Endothelial cell of umbilical vein (primary cell): ENCODE measurements at regions of chr1 and their contacts with region 1.

Region 1: GRCh38 chr1:205523891-205524793 is 19.7 kb downstream of the CDK18 start:
- DNase-seq: peak; percentile 62
- H3K4me3 ChIP-seq: no peak overlapping the region
- H3K27ac ChIP-seq: no peak overlapping the region
- H3K4me1 ChIP-seq: no peaks in the 10 kb centered on the region
- H3K27me3 ChIP-seq: peaks cover 0 to 4% of the 10 kb centered on the region in 2 experiments
- CTCF ChIP-seq: peak; percentile 70 to 80
- POLR2A ChIP-seq: no peak

Region 2: DNA sequence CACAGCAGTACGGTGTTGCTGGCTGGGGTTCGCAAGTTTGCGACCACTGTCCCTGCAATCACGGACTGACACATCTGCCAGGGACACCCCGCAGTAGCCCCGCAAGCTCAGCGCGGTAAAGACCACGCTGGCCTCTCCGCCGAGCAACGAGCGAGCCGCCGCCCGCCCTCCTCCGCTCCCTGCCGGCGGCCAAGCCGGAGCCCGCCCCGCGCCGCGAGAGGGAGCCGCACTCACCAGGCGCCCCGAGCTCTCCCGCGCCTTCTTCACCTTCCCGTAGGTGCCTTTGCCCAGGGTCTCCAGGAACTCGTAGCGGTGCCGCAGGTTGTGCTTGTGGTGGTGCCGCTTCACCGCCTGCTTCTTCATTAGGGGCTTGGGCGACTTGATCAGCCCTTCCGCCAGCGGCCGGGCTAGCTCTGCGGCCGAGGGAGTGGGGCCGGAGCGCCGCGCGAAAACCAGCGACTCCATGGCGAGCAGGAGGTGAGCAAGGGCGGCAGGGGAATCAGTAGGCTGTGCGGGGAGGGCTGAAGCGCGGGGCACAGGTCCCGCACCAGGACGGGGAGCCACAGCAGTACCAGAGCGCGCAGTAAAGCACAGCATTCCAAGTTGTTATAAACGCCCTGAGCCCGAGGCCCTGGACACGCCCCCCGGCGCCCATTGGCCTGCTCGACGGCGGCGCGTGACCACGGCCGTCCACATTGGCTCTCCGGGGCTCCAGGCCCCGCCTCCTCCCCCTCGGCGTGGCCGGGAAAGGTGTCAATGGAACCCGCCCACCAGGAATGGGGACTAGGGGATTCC is 202.8 kb before region 1 on chr1 and contains the start of gene NUAK2:
- CTCF ChIA-PET with region 1: interaction called, 13 read pairs
- POLR2A ChIA-PET with region 1: no interaction called
- dilution Hi-C with region 1: no loop called
- intact Hi-C with region 1: no loop called
- DNase-seq: peak; percentile 89
- H3K4me3 ChIP-seq: peak within 1 kb of the TSS; percentile 58 to 68 (median 65)
- H3K27ac ChIP-seq: no peak within 1 kb of the TSS
- H3K4me1 ChIP-seq: peaks cover 18% of the 10 kb centered on the region
- H3K27me3 ChIP-seq: peaks cover 0 to 3% of the 10 kb centered on the region in 2 experiments
- CTCF ChIP-seq: peak; percentile 8 to 43
- POLR2A ChIP-seq: no peak
- total RNA-seq, gene NUAK2: 2.3 and 2.5 TPM in 2 replicates

Region 3: GRCh38 chr1:205387845-205388244 is 136.3 kb before region 1 on chr1:
- CTCF ChIA-PET with region 1: interaction called, 10 read pairs
- POLR2A ChIA-PET with region 1: no interaction called
- dilution Hi-C with region 1: no loop called
- intact Hi-C with region 1: no loop called
- DNase-seq: no peak
- H3K4me3 ChIP-seq: no peak overlapping the region
- H3K27ac ChIP-seq: no peak overlapping the region
- H3K4me1 ChIP-seq: no peaks in the 10 kb centered on the region
- H3K27me3 ChIP-seq: peaks cover 4 to 5% of the 10 kb centered on the region in 2 experiments
- CTCF ChIP-seq: no peak
- POLR2A ChIP-seq: no peak

Region 4: GRCh38 chr1:205456868-205457745 is 67.0 kb before region 1 on chr1:
- CTCF ChIA-PET with region 1: no interaction called
- POLR2A ChIA-PET with region 1: no interaction called
- dilution Hi-C with region 1: no loop called
- intact Hi-C with region 1: no loop called
- DNase-seq: no peak
- H3K4me3 ChIP-seq: no peak overlapping the region
- H3K27ac ChIP-seq: no peak overlapping the region
- H3K4me1 ChIP-seq: no peaks in the 10 kb centered on the region
- H3K27me3 ChIP-seq: peaks cover 50 to 53% of the 10 kb centered on the region in 2 experiments
- CTCF ChIP-seq: no peak
- POLR2A ChIP-seq: no peak

Region 5: DNA sequence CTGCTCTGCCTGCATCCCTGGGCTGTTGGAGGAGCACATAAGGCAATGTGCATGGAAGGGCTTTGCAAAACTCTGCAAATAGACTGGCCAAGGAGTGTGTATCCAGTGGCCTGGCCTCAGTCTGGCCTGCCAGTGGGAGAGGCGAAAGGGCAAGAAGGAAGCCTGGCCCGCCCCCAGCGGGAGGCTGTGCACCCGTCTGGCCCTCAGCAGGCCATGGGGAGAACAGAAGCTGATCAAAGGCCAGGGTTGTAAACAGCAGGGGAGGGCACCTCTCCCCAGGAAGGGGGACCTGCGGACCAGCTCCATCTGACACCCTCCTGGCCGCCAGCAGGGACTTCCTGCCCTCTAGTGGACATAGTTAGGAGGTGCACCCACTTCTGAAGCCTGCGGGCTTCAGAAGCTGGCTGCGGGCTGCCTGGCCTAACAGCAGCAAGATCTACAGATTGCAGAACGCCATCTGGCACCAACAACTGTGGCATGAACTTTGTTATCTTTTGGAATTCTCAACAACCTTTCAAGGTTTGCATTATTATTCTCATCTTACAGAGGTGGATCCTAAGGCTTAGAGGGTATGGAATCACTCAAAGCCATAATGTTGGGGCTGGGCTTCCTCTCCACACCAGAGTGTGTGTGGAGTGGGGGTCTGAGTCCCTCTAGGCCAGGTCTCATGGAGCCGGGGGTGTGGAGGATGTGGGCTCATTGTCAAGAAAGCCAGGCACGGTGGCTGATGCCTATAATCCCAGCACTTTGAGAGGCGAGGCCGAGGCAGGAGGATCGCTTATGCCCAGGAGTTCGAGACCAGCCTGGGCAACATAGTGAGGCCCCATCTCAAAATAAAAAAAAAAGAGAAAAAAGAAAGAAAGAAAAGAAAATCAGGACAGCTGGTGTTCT is 38.6 kb before region 1 on chr1:
- CTCF ChIA-PET with region 1: interaction called, 360 read pairs
- POLR2A ChIA-PET with region 1: no interaction called
- dilution Hi-C with region 1: no loop called
- intact Hi-C with region 1: loop called (anchors 1 kb)
- DNase-seq: peak; percentile 55
- H3K4me3 ChIP-seq: no peak overlapping the region
- H3K27ac ChIP-seq: no peak overlapping the region
- H3K4me1 ChIP-seq: no peaks in the 10 kb centered on the region
- H3K27me3 ChIP-seq: peaks cover 7 to 13% of the 10 kb centered on the region in 2 experiments
- CTCF ChIP-seq: peak; percentile 85 to 96
- POLR2A ChIP-seq: no peak

Region 6: GRCh38 chr1:205536759-205537361 is 12.7 kb after region 1 on chr1:
- CTCF ChIA-PET with region 1: interaction called, 43 read pairs
- POLR2A ChIA-PET with region 1: no interaction called
- dilution Hi-C with region 1: no loop called
- intact Hi-C with region 1: no loop called
- DNase-seq: no peak
- H3K4me3 ChIP-seq: no peak overlapping the region
- H3K27ac ChIP-seq: no peak overlapping the region
- H3K4me1 ChIP-seq: peaks cover 3% of the 10 kb centered on the region
- H3K27me3 ChIP-seq: no peaks in the 10 kb centered on the region
- CTCF ChIP-seq: no peak
- POLR2A ChIP-seq: no peak

Region 7: DNA sequence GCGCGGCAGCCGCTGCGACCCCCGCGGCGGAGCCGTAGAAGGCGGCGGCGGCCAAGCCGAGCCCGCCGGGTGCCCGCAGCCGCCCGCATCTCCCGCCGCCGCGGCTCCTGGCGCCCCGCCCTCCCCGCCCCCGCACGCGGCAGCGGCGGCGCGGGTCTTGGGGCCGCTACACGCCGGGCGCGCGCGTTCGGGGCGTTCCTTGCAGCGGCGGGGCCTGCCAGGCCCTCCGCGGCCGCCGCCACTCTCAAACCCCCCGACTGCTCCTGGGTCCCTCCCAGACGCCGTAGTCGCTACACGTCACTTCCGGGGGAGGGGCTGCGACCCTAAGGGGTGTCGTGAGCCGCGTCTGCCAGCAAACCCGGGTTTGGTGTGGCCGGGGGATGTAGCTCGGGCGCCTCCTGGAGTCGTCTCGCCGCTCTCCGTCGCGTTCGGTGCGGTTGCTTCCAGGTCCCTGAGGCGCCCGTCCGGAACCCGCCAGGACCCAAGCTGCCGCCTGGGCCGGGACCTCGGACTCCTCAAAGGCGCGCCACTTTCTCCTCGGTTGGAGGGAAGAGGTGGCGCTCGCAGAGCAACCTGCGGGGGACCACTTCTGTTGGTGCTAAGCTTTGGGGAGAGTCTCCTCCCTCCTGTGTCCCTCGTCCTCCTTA is 107.7 kb after region 1 on chr1 and contains the start of gene ELK4:
- CTCF ChIA-PET with region 1: interaction called, 28 read pairs
- POLR2A ChIA-PET with region 1: interaction called, 4 read pairs
- dilution Hi-C with region 1: no loop called
- intact Hi-C with region 1: loop called (anchors 1 kb)
- DNase-seq: peak; percentile 98
- H3K4me3 ChIP-seq: peak within 1 kb of the TSS; percentile 88 to 97 (median 92)
- H3K27ac ChIP-seq: peak within 1 kb of the TSS; percentile 82
- H3K4me1 ChIP-seq: peaks cover 29% of the 10 kb centered on the region
- H3K27me3 ChIP-seq: no peaks in the 10 kb centered on the region
- CTCF ChIP-seq: peak; percentile 72 to 90
- POLR2A ChIP-seq: peak; percentile 88
- total RNA-seq, gene ELK4: 78.7 and 107 TPM in 2 replicates